ENCODE measurements at regions of chr10 and their contacts with region 1.

Region 1: DNA sequence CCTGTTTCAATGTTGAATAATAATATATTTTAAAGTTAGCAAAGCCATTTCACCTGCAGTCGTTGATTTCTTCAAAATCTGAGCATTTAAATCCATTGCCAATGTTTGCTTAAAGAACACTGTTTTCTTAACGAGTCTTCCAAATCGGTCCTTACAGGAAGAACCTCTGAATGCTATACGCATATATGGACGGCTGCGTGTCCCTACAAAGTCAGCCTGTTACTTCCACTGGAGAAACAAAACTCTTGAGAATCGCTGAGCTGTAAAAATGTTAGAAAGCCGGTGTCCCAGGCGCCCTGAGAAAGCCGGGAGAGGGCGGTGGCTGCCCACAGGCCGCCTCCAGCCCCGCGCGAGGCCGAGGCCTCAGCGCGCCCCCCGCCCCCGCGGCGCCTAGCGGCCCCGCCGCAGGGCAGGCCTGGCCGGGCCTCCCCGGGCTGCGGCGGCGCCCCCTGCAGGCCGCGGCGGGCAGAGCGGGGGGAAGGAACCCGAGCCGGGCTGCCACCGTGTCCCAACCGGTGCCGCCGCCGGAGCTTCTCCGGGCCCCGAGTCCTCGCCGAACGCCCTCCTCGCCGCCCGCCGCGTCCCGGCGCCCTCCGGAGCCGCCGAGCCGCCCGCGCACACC is at the start of gene FHIP2A:
- DNase-seq: peak; percentile 85
- ATAC-seq: peak; percentile 90
- H3K4me3 Mint-ChIP-seq: peak within 1 kb of the TSS; percentile 91
- H3K27ac Mint-ChIP-seq: peak within 1 kb of the TSS; percentile 92
- H3K4me1 Mint-ChIP-seq: peaks cover 40% of the 10 kb centered on the region
- H3K27me3 Mint-ChIP-seq: peaks cover 11% of the 10 kb centered on the region
- total RNA-seq, gene FHIP2A: 33.5 to 35.7 TPM

Region 2: DNA sequence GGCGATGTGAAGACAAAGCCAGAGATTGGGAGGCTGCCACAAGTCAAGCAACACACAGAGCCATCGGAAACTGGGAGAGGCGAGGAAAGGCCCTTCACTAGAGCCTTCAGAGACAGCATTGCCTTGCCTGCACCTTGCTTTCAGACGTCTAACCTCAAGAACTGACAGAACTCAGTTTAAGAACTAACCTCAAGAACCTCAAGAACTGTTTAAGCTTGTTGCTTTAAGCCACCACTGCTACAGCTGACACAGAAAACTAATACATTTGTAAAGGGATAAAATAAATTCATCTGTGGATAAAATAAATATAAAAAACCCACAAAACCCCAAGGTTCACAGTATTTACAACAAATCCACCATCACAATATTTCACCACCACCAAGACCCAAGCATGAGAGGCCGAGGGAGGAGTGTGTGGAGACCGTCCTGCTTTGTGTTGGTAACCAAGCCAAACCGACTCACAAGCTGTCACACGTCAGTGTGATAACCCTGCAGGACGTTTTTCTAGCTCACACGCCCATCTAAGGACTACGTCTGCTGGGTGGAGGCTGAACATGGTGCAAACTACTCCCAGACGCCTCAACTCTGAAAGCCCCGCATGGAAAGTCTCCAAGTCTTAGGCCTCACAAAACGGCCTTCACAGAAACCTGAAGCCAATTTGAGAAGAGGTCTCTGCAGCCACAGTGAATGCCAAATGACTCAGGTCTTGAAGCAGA is 280.2 kb before region 1 on chr10:
- CTCF ChIA-PET with region 1: interaction called, 18 read pairs
- DNase-seq: peak; percentile 92
- ATAC-seq: peak; percentile 84
- H3K4me3 Mint-ChIP-seq: peak overlapping the region; percentile 40
- H3K27ac Mint-ChIP-seq: peak overlapping the region; percentile 100
- H3K4me1 Mint-ChIP-seq: peaks cover 82% of the 10 kb centered on the region
- H3K27me3 Mint-ChIP-seq: no peaks in the 10 kb centered on the region

Region 3: GRCh38 chr10:114779803-114780609 is 41.4 kb before region 1 on chr10:
- CTCF ChIA-PET with region 1: interaction called, 10 read pairs
- DNase-seq: no peak
- ATAC-seq: no peak
- H3K4me3 Mint-ChIP-seq: no peak overlapping the region
- H3K27ac Mint-ChIP-seq: no peak overlapping the region
- H3K4me1 Mint-ChIP-seq: peaks cover 10% of the 10 kb centered on the region
- H3K27me3 Mint-ChIP-seq: peaks cover 12% of the 10 kb centered on the region

Region 4: GRCh38 chr10:114801411-114801813 is 20.0 kb before region 1 on chr10:
- CTCF ChIA-PET with region 1: interaction called, 46 read pairs
- DNase-seq: peak; percentile 67
- ATAC-seq: peak; percentile 93
- H3K4me3 Mint-ChIP-seq: peak overlapping the region; percentile 58
- H3K27ac Mint-ChIP-seq: peak overlapping the region; percentile 87
- H3K4me1 Mint-ChIP-seq: peaks cover 29% of the 10 kb centered on the region
- H3K27me3 Mint-ChIP-seq: no peaks in the 10 kb centered on the region

Region 5: GRCh38 chr10:114810926-114811325 is 10.5 kb before region 1 on chr10:
- CTCF ChIA-PET with region 1: interaction called, 35 read pairs
- DNase-seq: no peak
- ATAC-seq: peak; percentile 96
- H3K4me3 Mint-ChIP-seq: peak overlapping the region; percentile 37
- H3K27ac Mint-ChIP-seq: peak overlapping the region; percentile 90
- H3K4me1 Mint-ChIP-seq: peaks cover 37% of the 10 kb centered on the region
- H3K27me3 Mint-ChIP-seq: no peaks in the 10 kb centered on the region

Region 6: GRCh38 chr10:114876602-114877300 is 55.3 kb after region 1 on chr10:
- CTCF ChIA-PET with region 1: interaction called, 12 read pairs
- DNase-seq: peak; percentile 71
- ATAC-seq: peak; percentile 79
- H3K4me3 Mint-ChIP-seq: no peak overlapping the region
- H3K27ac Mint-ChIP-seq: no peak overlapping the region
- H3K4me1 Mint-ChIP-seq: peaks cover 22% of the 10 kb centered on the region
- H3K27me3 Mint-ChIP-seq: peaks cover 24% of the 10 kb centered on the region

Region 7: GRCh38 chr10:114995468-114996247 is 174.3 kb after region 1 on chr10:
- CTCF ChIA-PET with region 1: no interaction called
- DNase-seq: no peak
- ATAC-seq: no peak
- H3K4me3 Mint-ChIP-seq: no peak overlapping the region
- H3K27ac Mint-ChIP-seq: no peak overlapping the region
- H3K4me1 Mint-ChIP-seq: no peaks in the 10 kb centered on the region
- H3K27me3 Mint-ChIP-seq: no peaks in the 10 kb centered on the region

Measured in activated CD8-positive, alpha-beta memory T cell treated with anti-CD3 and anti-CD28 coated beads, Interleukin-2, amount 10 ng/mL, durations not matched to agents 7 days and 5 days (primary cell).